Activated naive CD4-positive, alpha-beta T cell treated with anti-CD3 and anti-CD28 coated beads for 36 hours (primary cell): ENCODE measurements at regions of chr5 and their contacts with region 1.

Region 1: GRCh38 chr5:58460732-58461286 is 923 bp upstream of the PLK2 start:
- DNase-seq: peak; percentile 95
- H3K4me3 Mint-ChIP-seq: peak overlapping the region; percentile 78
- H3K27ac Mint-ChIP-seq: peak overlapping the region; percentile 81
- H3K4me1 Mint-ChIP-seq: peaks cover 15% of the 10 kb centered on the region
- H3K27me3 Mint-ChIP-seq: peaks cover 13% of the 10 kb centered on the region

Region 2: DNA sequence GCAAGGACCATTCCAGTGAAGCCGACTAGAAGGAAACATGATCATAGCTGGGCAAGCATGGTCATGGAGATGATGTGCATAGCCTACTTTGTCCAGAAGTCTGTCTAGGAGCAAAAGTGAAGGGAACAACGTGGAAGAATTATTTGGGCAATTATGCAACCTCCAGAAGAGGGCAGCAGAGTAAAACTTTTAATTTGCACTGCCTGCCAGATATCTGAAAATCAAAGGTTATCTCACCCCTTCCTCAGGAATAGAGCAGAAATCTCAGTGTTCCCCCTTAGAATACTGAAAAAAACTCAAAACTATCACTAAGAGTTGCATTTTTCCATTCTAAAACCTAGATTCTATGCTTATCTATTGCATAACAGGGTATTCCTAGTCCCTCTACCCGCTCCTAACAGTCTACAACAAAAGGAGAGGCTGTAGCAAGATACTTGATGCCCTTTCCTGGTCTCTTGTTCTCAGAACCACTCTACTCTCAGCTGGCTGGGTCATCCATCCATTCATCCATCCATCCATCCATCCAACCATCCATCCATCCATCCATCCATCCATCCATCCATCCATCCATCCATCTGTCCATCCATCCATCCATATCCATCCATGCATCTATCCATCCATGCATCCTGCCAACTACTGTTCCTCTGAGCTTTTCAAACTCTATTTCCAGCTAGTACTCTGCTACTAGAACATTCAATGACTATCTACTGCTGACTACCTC is 1559.8 kb before region 1 on chr5:
- CTCF ChIA-PET with region 1: no interaction called
- intact Hi-C with region 1: loop called (anchors 1 kb)
- DNase-seq: peak; percentile 46
- H3K4me3 Mint-ChIP-seq: no peak overlapping the region
- H3K27ac Mint-ChIP-seq: no peak overlapping the region
- H3K4me1 Mint-ChIP-seq: peaks cover 2% of the 10 kb centered on the region
- H3K27me3 Mint-ChIP-seq: no peaks in the 10 kb centered on the region

Region 3: DNA sequence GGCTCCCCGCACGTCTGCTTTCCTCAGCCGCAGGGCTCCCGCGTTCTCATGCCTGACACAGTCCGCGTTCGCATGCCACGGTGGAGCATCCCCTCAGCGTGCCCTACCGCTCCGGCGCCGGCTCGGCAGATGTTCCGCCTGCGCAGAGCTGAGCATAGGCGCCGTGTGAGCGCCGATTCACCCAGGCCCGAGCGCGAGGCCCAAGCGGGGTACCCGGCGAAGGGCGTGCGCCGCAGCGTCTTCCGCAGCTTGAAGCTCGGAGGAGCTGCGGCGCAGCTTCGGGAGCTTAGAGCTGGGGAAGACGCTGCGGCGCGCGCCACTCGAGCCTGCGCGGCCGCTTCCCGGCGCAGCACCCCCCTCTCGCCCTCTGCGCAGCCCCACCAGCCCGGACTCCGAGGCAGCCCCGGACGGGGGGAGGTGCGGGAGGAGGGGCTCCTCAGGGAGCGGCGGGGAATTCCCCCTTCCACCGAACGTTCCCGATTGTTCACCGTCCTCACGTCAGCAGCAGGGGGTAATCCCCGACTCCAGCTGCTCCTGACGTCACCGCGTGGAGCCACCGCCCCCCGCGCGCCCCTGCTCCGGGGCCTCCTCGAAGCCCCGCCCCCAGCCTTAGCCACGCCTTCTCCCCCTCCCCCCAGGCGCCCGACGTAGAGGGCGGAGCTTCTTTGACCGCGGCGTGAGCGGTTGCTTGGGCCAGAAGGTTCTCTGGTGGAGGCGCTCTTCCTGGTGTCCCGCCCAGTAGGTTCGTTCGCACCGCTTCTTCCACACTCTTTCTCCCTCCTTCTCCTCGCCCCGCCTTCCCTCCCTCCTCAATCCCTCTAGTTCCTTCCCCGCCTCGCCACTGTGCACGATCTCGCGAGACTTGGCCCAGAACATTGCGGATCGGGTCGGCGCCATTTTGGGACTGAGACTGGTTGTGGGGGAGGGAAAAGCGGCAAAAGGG is 1287.4 kb before region 1 on chr5 and contains the start of gene GPBP1:
- CTCF ChIA-PET with region 1: no interaction called
- intact Hi-C with region 1: loop called (anchors 1 kb)
- DNase-seq: peak; percentile 99
- H3K4me3 Mint-ChIP-seq: peak within 1 kb of the TSS; percentile 94
- H3K27ac Mint-ChIP-seq: peak within 1 kb of the TSS; percentile 97
- H3K4me1 Mint-ChIP-seq: peaks cover 19% of the 10 kb centered on the region
- H3K27me3 Mint-ChIP-seq: no peaks in the 10 kb centered on the region
- total RNA-seq, gene GPBP1: 91.5 to 91.9 TPM

Region 4: GRCh38 chr5:57327561-57328394 is 1133.0 kb before region 1 on chr5:
- CTCF ChIA-PET with region 1: interaction called, 5 read pairs
- intact Hi-C with region 1: loop called (anchors 1 kb)
- DNase-seq: peak; percentile 6
- H3K4me3 Mint-ChIP-seq: no peak overlapping the region
- H3K27ac Mint-ChIP-seq: no peak overlapping the region
- H3K4me1 Mint-ChIP-seq: peaks cover 23% of the 10 kb centered on the region
- H3K27me3 Mint-ChIP-seq: no peaks in the 10 kb centered on the region

Region 5: DNA sequence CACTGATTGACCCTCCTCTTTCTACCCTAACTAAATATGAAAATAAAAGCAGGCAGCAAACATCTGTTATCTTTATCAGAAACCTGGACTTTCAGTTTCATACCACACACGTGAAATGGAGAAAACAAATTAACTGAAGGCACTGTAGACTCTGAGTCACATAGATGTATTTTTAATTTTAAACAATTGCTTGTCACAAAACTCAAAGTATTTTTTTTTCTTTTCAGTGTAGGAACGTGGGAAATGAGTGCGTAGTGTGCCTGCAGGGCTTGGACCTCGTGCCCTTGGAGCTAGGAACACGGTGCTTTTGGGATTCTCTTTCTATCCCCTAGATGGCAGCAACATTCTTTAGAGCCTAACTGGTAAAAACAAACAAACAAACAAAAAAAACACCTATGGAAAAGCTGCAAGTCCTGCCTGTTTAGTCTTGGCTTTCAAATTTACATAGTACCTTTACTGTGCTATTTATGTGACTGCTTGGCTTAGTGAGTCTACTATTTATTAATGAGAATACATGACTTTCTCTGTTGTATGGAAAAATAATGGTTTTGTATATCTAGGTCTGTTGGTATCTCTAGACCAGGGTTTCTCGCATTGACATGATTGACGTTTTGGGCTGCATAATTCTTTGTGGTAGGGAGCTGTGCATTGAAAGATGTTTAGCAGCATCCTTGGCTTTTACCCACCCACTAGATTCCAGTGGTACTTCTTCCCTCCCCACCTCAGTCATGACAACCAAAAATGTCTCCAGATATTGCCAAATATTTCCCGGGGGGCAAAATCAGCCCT is 961.4 kb before region 1 on chr5:
- CTCF ChIA-PET with region 1: interaction called, 6 read pairs
- intact Hi-C with region 1: loop called (anchors 1 kb)
- DNase-seq: peak; percentile 31
- H3K4me3 Mint-ChIP-seq: peak overlapping the region; percentile 51
- H3K27ac Mint-ChIP-seq: no peak overlapping the region
- H3K4me1 Mint-ChIP-seq: peaks cover 19% of the 10 kb centered on the region
- H3K27me3 Mint-ChIP-seq: no peaks in the 10 kb centered on the region

Region 6: DNA sequence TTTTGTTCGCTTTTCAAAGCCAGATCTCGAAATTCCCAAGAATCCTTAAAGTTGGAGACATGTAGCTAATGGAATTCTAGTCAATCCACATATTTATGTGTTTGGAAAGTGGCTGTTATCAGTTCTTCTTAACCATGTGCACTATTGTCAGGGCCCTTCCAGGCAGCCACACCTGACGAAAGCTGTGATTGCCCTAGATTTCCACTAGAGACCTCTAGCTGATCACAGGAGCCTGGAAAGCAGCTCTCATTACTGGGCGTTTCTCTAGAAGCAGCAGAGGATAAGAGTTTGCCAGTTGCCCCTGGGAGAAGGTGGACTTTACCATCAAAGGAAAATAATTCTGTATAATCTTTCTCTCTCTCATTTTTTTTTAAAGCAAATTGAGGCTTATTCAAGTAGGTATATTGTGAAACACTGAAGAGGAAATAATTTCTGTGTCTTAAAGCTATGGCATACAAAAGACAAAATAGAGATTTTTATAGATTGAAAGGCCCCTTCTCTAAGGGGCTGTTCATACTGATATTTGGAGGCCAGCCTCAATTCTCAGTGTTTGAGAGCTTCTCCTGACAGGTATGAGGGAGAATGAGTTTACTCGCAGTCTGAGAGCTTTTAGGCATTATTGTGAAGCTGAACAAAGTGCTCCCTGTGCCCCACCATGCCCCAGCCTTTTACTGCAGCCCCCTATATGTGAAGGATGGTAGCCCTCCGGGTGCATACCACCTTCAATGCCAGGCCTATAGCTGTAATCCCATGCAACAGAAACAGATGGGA is 572.8 kb before region 1 on chr5:
- CTCF ChIA-PET with region 1: no interaction called
- intact Hi-C with region 1: loop called (anchors 1 kb)
- DNase-seq: no peak
- H3K4me3 Mint-ChIP-seq: no peak overlapping the region
- H3K27ac Mint-ChIP-seq: no peak overlapping the region
- H3K4me1 Mint-ChIP-seq: no peaks in the 10 kb centered on the region
- H3K27me3 Mint-ChIP-seq: no peaks in the 10 kb centered on the region